GM10248 (cell line): ENCODE measurements at regions of chr18 and their contacts with region 1.

Region 1: DNA sequence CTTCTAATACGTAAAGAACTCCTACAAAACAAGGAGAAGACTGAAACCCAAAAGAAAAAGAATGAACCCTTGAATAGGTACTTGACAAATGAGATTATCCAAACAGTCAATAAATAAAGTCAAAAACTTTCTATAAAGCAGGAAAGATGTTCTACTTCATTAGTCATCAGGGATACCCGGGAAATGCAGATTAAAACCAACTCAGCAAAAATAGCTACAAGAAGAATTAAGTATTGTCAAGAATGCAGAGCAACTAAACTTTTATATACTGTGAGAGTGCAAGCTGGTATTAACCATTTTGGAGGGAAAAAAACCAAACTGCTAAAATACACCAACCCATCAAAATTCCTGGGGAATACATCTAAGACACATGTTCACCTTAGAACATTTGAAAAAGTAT is 10.4 kb downstream of the TXNL1 start:
- DNase-seq: no peak
- CTCF ChIP-seq: no peak

Region 2: GRCh38 chr18:56615738-56616520 is 12.1 kb before region 1 on chr18:
- CTCF ChIA-PET with region 1: interaction called, 16 read pairs
- POLR2A ChIA-PET with region 1: no interaction called
- DNase-seq: no peak
- CTCF ChIP-seq: no peak